ENCODE measurements at regions of chr2 and their contacts with region 1.

Region 1: DNA sequence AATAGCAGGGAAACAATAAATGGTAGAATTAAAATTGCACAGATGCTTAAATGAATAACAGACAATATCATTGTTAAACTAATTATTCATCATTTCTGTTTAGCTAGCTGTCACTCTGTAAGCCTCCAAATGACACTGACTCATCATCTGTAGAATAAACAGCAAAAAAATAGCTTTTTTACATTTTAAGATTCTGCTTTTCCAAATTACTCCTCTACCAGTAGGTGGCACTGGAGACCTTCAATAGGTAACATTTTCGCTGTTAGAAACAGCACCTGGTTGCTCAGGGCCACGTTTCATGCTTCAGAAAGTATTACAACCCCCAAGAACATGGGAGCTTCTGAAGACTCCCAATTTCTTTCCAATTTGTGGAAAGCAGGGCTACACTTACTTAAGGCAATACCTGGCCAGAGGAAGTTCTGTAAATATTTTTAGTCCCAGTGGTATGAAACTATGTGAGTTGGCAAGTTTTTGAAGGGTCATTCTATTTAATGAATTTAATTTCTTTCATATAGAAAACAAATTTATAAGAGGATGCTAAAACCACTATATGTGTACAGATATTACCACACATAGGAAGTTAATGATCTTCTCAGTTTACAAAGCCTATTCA is 45.4 kb downstream of the TTN start:
- DNase-seq: peak; percentile 73
- H3K4me3 Mint-ChIP-seq: no peak overlapping the region
- H3K27ac Mint-ChIP-seq: no peak overlapping the region
- H3K4me1 Mint-ChIP-seq: no peaks in the 10 kb centered on the region
- H3K27me3 Mint-ChIP-seq: peaks cover 44% of the 10 kb centered on the region
- CTCF ChIP-seq: peak; percentile 70

Region 2: GRCh38 chr2:178747767-178748166 is 14.1 kb before region 1 on chr2:
- CTCF ChIA-PET with region 1: interaction called, 15 read pairs
- POLR2A ChIA-PET with region 1: interaction called, 4 read pairs
- intact Hi-C with region 1: no loop called
- DNase-seq: no peak
- H3K4me3 Mint-ChIP-seq: no peak overlapping the region
- H3K27ac Mint-ChIP-seq: no peak overlapping the region
- H3K4me1 Mint-ChIP-seq: no peaks in the 10 kb centered on the region
- H3K27me3 Mint-ChIP-seq: peaks cover 88% of the 10 kb centered on the region
- CTCF ChIP-seq: no peak

Region 3: GRCh38 chr2:178776751-178777150 is 14.9 kb after region 1 on chr2:
- CTCF ChIA-PET with region 1: interaction called, 11 read pairs
- POLR2A ChIA-PET with region 1: interaction called, 3 read pairs
- intact Hi-C with region 1: no loop called
- DNase-seq: no peak
- H3K4me3 Mint-ChIP-seq: no peak overlapping the region
- H3K27ac Mint-ChIP-seq: no peak overlapping the region
- H3K4me1 Mint-ChIP-seq: no peaks in the 10 kb centered on the region
- H3K27me3 Mint-ChIP-seq: no peaks in the 10 kb centered on the region
- CTCF ChIP-seq: no peak

Region 4: GRCh38 chr2:178914259-178914849 is 152.5 kb after region 1 on chr2:
- CTCF ChIA-PET with region 1: interaction called, 8 read pairs
- POLR2A ChIA-PET with region 1: no interaction called
- intact Hi-C with region 1: loop called (anchors 1 kb)
- DNase-seq: peak; percentile 85
- H3K4me3 Mint-ChIP-seq: no peak overlapping the region
- H3K27ac Mint-ChIP-seq: no peak overlapping the region
- H3K4me1 Mint-ChIP-seq: peaks cover 16% of the 10 kb centered on the region
- H3K27me3 Mint-ChIP-seq: no peaks in the 10 kb centered on the region
- CTCF ChIP-seq: peak; percentile 70

Region 5: DNA sequence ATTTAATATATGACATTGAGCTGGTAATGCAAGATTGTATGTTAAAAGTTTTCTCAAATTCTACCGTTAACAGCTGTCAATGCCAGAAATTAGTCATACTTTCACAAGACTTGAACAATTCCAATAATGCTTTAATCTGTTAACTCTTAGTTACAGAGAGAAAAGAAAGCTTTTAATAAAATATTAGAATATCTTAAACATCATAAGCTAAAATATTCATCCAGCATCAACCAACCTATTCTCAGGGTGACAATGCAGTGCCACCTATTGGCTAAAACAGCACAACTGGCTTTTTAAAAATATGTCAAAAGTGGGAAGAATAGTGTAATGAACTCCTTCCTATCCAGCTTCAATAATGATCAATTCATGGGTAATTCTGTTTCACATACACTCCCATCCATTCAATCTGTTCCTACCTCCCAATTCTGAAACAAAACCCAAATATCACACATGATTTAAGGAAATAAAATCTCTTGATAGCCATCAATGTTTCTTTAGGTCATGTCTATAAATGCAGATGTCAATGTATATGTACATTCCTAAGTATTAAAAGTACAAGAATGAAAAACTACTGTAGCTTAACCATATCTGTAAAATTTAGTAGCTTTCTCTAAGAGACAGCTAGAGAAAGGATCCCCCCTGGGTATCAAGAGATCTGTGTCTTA is 367.8 kb after region 1 on chr2:
- CTCF ChIA-PET with region 1: interaction called, 8 read pairs
- POLR2A ChIA-PET with region 1: interaction called, 5 read pairs
- intact Hi-C with region 1: loop called (anchors 2 kb)
- DNase-seq: peak; percentile 29
- H3K4me3 Mint-ChIP-seq: no peak overlapping the region
- H3K27ac Mint-ChIP-seq: no peak overlapping the region
- H3K4me1 Mint-ChIP-seq: no peaks in the 10 kb centered on the region
- H3K27me3 Mint-ChIP-seq: no peaks in the 10 kb centered on the region
- CTCF ChIP-seq: peak; percentile 43